Esophagus muscularis mucosa (tissue), 4 donors: ENCODE measurements at regions of chr9 and their contacts with region 1.

Region 1: GRCh38 chr9:19127881-19128500 is 699 bp upstream of the PLIN2 start:
- DNase-seq: no peak
- H3K4me3 ChIP-seq: peak overlapping the region; percentile 66 to 80 (median 77)
- H3K27ac ChIP-seq: peak overlapping the region; percentile 91 to 96 (median 94)
- H3K4me1 ChIP-seq: peaks cover 22 to 46% (median 36%) of the 10 kb centered on the region in 4 donors
- H3K27me3 ChIP-seq: no peaks in the 10 kb centered on the region
- CTCF ChIP-seq: no peak
- EP300 ChIP-seq: no peak
- POLR2A ChIP-seq: no peak

Region 2: DNA sequence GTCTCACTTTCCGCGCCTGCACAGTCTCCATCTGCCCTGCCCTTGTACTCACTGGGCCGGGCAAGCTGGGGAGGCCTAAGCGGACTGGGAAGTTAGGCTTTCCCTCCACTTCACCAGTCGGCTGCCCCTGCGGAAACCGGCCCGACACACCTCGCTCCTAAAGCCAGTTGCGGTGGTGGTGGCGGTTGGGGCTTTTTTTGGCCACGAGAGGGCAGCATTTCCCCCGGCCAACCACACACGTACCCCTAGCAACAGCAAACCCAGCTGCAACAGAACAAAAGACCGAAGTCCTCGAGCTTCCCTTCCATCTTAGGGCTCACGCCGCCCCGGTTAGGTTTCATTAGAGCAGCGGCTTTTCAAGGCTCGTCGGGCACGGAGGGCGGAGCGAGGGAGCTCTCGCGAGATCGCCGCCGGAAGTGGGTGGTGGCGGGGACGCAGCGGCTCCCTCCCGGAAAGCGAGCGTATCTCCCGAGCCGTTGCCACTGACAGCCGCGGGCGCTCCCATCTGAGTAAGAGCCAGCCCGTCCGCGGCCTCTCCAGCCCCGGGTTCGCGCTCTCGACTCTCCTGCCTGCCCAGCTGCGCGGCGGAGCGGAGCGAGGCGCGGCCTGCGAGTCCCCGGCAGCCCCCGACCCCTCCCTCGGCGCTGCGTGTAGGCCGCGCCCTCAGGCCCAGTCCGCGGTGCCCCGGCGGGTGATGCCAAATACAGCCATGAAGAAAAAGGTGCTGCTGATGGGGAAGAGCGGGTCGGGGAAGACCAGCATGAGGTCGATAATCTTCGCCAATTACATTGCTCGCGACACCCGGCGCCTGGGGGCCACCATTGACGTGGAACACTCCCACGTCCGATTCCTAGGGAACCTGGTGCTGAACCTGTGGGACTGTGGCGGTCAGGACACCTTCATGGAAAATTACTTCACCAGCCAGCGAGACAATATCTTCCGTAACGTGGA is 78.8 kb before region 1 on chr9 and contains the start of gene RRAGA:
- intact Hi-C with region 1: loop called (anchors 2 kb)
- DNase-seq: peak; percentile 98
- H3K4me3 ChIP-seq: peak within 1 kb of the TSS; percentile 76 to 95 (median 86)
- H3K27ac ChIP-seq: peak within 1 kb of the TSS; percentile 92 to 99 (median 96)
- H3K4me1 ChIP-seq: peaks cover 23 to 46% (median 41%) of the 10 kb centered on the region in 4 donors
- H3K27me3 ChIP-seq: no peaks in the 10 kb centered on the region
- CTCF ChIP-seq: peak; percentile 75 to 88 (median 83)
- EP300 ChIP-seq: no peak
- POLR2A ChIP-seq: peak; percentile 79
- total RNA-seq, gene RRAGA: 51.0 to 94.3 (median 70.0) TPM

Region 3: GRCh38 chr9:19102631-19103345 is 25.2 kb before region 1 on chr9 and contains the start of gene HAUS6:
- intact Hi-C with region 1: loop called (anchors 2 kb)
- DNase-seq: peak; percentile 99
- H3K4me3 ChIP-seq: peak within 1 kb of the TSS; percentile 72 to 87 (median 76)
- H3K27ac ChIP-seq: peak within 1 kb of the TSS; percentile 83 to 91 (median 86)
- H3K4me1 ChIP-seq: peaks cover 13 to 32% (median 23%) of the 10 kb centered on the region in 4 donors
- H3K27me3 ChIP-seq: no peaks in the 10 kb centered on the region
- CTCF ChIP-seq: peak; percentile 24 to 66 (median 58)
- EP300 ChIP-seq: no peak
- POLR2A ChIP-seq: peak; percentile 52
- total RNA-seq, gene HAUS6: 7.1 to 8.7 (median 7.3) TPM

Region 4: DNA sequence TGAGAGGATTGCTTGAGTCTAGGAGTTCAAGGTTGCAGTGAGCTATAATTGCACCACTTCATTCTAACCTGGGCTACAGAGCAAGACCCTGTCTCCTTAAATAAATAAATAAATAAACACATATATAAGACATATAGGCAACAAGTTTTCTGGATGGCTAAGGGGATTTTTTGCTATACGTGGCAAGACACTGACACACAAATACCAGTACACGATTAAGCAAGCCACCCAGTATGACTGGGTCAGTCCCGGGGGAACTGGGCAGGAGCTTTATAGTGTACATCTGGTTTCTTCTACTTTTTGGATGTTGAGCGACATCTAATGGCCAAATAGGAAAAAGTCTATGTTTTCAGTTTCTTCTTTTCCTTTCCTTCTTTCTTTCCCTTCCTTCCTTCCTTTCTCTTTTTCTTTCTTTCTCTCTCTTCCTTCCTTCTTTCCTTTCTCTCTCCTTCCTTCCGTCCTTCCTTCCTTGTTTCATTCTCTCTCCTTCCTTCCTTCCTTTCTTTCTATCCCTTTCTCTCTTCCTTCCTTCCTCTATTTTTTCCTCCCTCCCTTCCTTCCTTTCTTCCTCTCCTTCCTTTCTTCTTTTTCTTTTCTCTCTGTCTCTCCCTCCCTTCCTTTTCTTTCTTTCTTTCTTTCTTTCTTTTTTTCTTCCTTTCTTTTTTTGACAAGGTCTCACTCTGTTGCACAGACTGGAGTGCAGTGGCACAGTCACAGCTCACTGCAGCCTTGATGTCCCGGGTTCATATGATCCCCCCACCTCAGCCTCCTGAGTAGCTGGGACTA is 46.3 kb after region 1 on chr9:
- intact Hi-C with region 1: loop called (anchors 5 kb)
- DNase-seq: no peak
- H3K4me3 ChIP-seq: no peak overlapping the region
- H3K27ac ChIP-seq: no peak overlapping the region
- H3K4me1 ChIP-seq: peaks cover 8 to 12% (median 10%) of the 10 kb centered on the region in 4 donors
- H3K27me3 ChIP-seq: no peaks in the 10 kb centered on the region
- CTCF ChIP-seq: peak; percentile 51 to 61 (median 56)
- EP300 ChIP-seq: no peak
- POLR2A ChIP-seq: no peak